ENCODE measurements at regions of chrX and their contacts with region 1.

Region 1: DNA sequence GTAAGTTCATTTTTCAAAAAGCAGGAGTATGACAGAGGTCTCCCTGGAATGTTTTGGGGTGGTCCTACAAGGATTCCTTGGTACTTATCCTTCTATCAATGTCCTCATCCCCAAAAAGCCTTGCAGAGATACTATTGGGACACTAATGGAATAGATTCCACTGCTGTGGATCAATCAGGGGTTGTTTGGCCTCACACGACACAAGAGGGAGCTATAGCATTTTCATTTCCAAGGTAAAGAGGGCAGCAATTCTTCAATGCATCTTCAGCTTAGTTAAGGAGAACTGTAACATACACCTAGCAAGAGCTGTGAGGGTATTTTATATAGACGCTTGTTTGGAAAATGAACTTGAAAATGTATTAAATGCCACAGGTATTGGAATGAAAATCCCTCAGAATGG is 50.9 kb downstream of the USP26 start:
- DNase-seq: peak; percentile 32
- H3K4me3 Mint-ChIP-seq: no peak overlapping the region
- H3K27ac Mint-ChIP-seq: no peak overlapping the region
- H3K4me1 Mint-ChIP-seq: no peaks in the 10 kb centered on the region
- H3K27me3 Mint-ChIP-seq: peaks cover 34% of the 10 kb centered on the region
- CTCF ChIP-seq: peak; percentile 29

Region 2: GRCh38 chrX:133005066-133005465 is 40.9 kb before region 1 on chrX:
- CTCF ChIA-PET with region 1: interaction called, 16 read pairs
- POLR2A ChIA-PET with region 1: no interaction called
- intact Hi-C with region 1: no loop called
- DNase-seq: peak; percentile 30
- H3K4me3 Mint-ChIP-seq: no peak overlapping the region
- H3K27ac Mint-ChIP-seq: no peak overlapping the region
- H3K4me1 Mint-ChIP-seq: no peaks in the 10 kb centered on the region
- H3K27me3 Mint-ChIP-seq: peaks cover 53% of the 10 kb centered on the region
- CTCF ChIP-seq: peak; percentile 57

Region 3: GRCh38 chrX:133033010-133033409 is 13.0 kb before region 1 on chrX:
- CTCF ChIA-PET with region 1: interaction called, 11 read pairs
- POLR2A ChIA-PET with region 1: no interaction called
- intact Hi-C with region 1: no loop called
- DNase-seq: no peak
- H3K4me3 Mint-ChIP-seq: no peak overlapping the region
- H3K27ac Mint-ChIP-seq: no peak overlapping the region
- H3K4me1 Mint-ChIP-seq: no peaks in the 10 kb centered on the region
- H3K27me3 Mint-ChIP-seq: peaks cover 29% of the 10 kb centered on the region
- CTCF ChIP-seq: no peak

Region 4: GRCh38 chrX:133171962-133172708 is 126.1 kb after region 1 on chrX:
- CTCF ChIA-PET with region 1: interaction called, 14 read pairs
- POLR2A ChIA-PET with region 1: no interaction called
- intact Hi-C with region 1: loop called (anchors 1 kb)
- DNase-seq: peak; percentile 56
- H3K4me3 Mint-ChIP-seq: no peak overlapping the region
- H3K27ac Mint-ChIP-seq: no peak overlapping the region
- H3K4me1 Mint-ChIP-seq: no peaks in the 10 kb centered on the region
- H3K27me3 Mint-ChIP-seq: peaks cover 67% of the 10 kb centered on the region
- CTCF ChIP-seq: peak; percentile 71

Region 5: GRCh38 chrX:133215747-133216146 is 169.8 kb after region 1 on chrX:
- CTCF ChIA-PET with region 1: no interaction called
- POLR2A ChIA-PET with region 1: no interaction called
- intact Hi-C with region 1: loop called (anchors 1 kb)
- DNase-seq: peak; percentile 54
- H3K4me3 Mint-ChIP-seq: no peak overlapping the region
- H3K27ac Mint-ChIP-seq: no peak overlapping the region
- H3K4me1 Mint-ChIP-seq: no peaks in the 10 kb centered on the region
- H3K27me3 Mint-ChIP-seq: peaks cover 23% of the 10 kb centered on the region
- CTCF ChIP-seq: peak; percentile 28

Region 6: DNA sequence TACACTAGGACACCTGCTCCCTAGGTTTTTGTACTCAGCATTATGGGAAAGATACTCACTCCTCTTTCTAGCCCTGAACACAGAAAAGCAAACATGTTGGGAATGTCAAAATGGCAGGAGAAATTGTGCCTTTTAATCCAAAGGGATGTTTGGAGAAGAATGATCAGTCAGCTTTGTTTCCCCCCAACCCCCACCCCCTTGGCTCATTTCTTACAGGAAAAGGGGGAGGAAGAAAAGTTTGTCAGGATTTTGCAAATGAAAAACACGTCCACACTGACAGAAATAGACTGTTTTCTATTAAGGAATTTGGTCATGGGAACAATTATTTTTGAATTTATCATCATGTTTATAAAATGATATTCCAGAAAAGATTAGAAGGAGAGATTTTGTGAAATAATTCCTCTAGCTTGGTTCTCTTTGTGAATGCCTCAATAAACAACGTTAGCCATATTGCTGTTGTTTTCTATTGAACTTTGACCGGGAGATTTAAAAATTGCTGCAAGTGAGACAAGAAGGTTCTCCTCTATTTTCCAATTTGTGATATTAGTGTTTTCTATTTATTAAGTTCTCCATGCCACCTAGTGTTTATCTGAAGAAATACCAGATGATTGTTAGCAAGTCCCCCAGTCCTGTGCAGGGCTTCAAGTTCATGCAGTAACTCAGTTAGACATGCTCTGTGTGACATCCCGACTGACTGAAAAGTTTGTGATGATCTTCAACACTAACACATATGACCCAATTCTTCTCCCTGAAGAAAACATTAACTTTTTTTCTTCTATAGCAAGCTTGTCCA is 203.5 kb after region 1 on chrX:
- CTCF ChIA-PET with region 1: interaction called, 3 read pairs
- POLR2A ChIA-PET with region 1: no interaction called
- intact Hi-C with region 1: loop called (anchors 1 kb)
- DNase-seq: peak; percentile 11
- H3K4me3 Mint-ChIP-seq: no peak overlapping the region
- H3K27ac Mint-ChIP-seq: no peak overlapping the region
- H3K4me1 Mint-ChIP-seq: no peaks in the 10 kb centered on the region
- H3K27me3 Mint-ChIP-seq: peaks cover 50% of the 10 kb centered on the region
- CTCF ChIP-seq: peak; percentile 4

Region 7: DNA sequence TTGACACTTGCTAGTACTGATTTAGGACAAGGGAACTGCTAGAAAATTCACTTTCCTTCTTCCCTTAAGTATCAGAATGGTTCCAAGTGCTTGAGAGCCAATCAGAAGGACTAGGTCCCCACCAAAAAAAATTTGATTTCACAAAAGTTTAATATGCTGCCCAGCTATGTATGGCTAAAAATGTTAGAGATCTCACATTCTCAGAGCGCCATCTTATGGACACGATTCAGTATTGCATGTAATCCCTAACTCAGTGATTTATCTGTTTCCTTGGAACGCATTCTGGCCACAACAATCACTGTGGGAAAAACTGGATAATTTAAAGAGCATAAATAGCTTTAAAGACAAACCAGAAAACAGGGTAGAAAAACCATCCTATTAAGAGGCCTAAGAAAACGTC is 624.4 kb after region 1 on chrX:
- CTCF ChIA-PET with region 1: no interaction called
- POLR2A ChIA-PET with region 1: no interaction called
- intact Hi-C with region 1: loop called (anchors 5 kb)
- DNase-seq: peak; percentile 57
- H3K4me3 Mint-ChIP-seq: no peak overlapping the region
- H3K27ac Mint-ChIP-seq: no peak overlapping the region
- H3K4me1 Mint-ChIP-seq: no peaks in the 10 kb centered on the region
- H3K27me3 Mint-ChIP-seq: peaks cover 48% of the 10 kb centered on the region
- CTCF ChIP-seq: peak; percentile 79

Measured in MCF 10A (cell line).